ENCODE measurements at regions of chr7 and their contacts with region 1.

Region 1: GRCh38 chr7:100132697-100133151 is 6.0 kb downstream of the MBLAC1 start:
- DNase-seq: peak; percentile 89
- H3K4me3 ChIP-seq: peak overlapping the region in 1 of 2 experiments; percentile 6; a peak in 1 of 4 replicates
- H3K27ac ChIP-seq: 0 out of 4 replicates have a peak overlapping the region, but pooled peaks of 1 of the 2 experiments have one; percentile 1
- H3K4me1 ChIP-seq: peaks cover 5 to 10% of the 10 kb centered on the region in 2 experiments; a peak in 2 of 4 replicates
- H3K27me3 ChIP-seq: no peaks in the 10 kb centered on the region
- CTCF ChIP-seq: peak; percentile 97
- EP300 ChIP-seq: no peak
- RAD21 ChIP-seq: peak; percentile 97

Region 2: DNA sequence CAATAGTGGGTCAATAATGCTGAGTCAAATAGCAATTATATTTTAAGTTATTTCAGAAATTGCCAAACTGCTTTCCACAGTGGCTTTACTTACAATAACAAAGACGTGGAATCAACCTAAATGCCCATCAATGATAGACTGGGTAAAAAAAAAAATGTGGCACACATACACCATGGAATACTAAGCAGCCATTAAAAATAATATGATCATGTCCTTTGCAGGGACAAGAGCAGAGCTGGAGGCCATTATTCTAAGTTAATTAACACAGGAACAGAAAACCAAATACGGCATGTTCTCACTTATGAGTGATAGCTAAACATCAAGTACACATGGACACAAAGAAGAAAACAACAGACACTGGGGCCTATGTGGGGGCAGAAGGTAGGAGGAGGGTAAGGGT is 333.8 kb before region 1 on chr7:
- CTCF ChIA-PET with region 1: no interaction called
- POLR2A ChIA-PET with region 1: no interaction called
- DNase-seq: no peak
- H3K4me3 ChIP-seq: no peak overlapping the region
- H3K27ac ChIP-seq: no peak overlapping the region
- H3K4me1 ChIP-seq: no peaks in the 10 kb centered on the region
- H3K27me3 ChIP-seq: peaks cover 7% of the 10 kb centered on the region; the same call in 1 of the 2 replicates
- CTCF ChIP-seq: no peak
- EP300 ChIP-seq: no peak
- RAD21 ChIP-seq: no peak

Region 3: DNA sequence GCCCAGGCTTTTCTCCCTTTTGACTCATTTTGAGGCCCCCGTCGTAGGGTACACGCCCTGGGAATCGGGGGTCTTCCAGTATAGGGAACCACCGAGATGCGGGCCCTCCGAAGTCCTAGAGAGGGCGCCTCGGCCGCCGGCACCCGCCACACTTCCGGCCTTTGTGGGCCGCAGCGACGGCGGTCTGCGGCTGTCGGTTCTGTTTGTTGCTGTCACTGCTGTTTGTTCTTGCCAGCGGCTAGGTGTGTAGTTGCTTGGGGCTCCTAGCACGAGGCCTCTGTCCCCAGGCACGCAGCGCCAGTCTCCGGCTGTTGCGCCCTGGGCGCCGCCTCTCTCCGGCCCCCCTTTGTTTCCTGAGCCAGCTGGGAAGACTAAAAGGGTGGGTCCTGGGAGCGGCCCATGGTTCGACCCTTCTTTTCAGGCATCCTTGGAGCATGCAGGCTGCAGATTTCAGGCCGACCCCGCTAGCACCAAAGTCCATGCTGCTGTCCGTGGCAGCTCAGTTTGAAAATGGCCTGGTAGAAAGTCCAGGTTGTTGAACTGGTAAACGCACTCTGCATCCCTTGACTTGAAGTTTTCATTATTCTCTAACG is 135.1 kb before region 1 on chr7:
- CTCF ChIA-PET with region 1: interaction called, 42 read pairs
- POLR2A ChIA-PET with region 1: no interaction called
- DNase-seq: peak; percentile 82
- H3K4me3 ChIP-seq: peak overlapping the region in 1 of 2 experiments; percentile 2; a peak in 1 of 4 replicates
- H3K27ac ChIP-seq: no peak overlapping the region
- H3K4me1 ChIP-seq: no peaks in the 10 kb centered on the region; a peak in 1 of 4 replicates
- H3K27me3 ChIP-seq: peaks cover 7% of the 10 kb centered on the region; the same call in 1 of the 2 replicates
- CTCF ChIP-seq: no peak
- EP300 ChIP-seq: no peak
- RAD21 ChIP-seq: no peak

Region 4: DNA sequence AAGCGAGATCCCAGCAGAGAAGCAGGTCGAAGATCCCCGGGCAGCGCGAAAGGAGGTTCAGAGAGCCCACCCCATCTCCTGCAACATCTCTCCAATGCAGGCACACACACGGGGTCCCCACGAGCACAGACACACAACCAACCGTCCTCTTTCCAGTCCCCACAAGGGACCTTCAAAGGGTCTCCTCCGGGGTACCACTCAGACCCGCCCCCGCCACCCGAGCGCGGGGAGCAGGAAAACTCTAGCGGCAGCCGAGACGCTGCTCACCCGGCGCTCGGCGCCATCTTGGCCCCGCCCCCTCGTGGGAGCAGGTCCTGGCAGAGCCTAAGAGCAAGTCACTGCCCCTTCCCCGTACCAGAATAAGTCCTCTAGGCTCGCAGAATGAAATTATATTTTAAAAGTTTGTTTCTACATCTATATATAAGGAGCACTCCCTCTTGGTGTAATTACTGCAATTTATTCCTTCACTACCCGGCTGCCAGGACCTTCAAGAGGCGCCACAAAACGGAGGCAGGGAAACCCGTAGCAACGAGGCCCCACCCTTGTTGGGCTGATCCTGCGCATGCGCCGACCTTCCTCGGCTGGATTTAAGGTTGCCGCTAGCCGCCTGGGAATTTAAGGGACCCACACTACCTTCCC is 13.5 kb before region 1 on chr7 and contains the starts of genes CNPY4 and TAF6:
- CTCF ChIA-PET with region 1: interaction called, 42 read pairs
- POLR2A ChIA-PET with region 1: no interaction called
- DNase-seq: peak; percentile 100
- H3K4me3 ChIP-seq: peak within 1 kb of the TSS; percentile 69 to 97
- H3K27ac ChIP-seq: peak within 1 kb of the TSS; percentile 84
- H3K4me1 ChIP-seq: peaks cover 0 to 11% of the 10 kb centered on the region in 2 experiments; a peak in 2 of 4 replicates
- H3K27me3 ChIP-seq: no peaks in the 10 kb centered on the region
- CTCF ChIP-seq: no peak
- EP300 ChIP-seq: no peak
- RAD21 ChIP-seq: no peak
- polyA plus RNA-seq, gene CNPY4: 52.0 and 65.0 TPM in 2 replicates
- polyA plus RNA-seq, gene TAF6: 31.7 and 70.5 TPM in 2 replicates

Region 5: GRCh38 chr7:100158229-100159098 is 25.7 kb after region 1 on chr7 and contains the start of gene TRAPPC14:
- CTCF ChIA-PET with region 1: interaction called, 33 read pairs
- POLR2A ChIA-PET with region 1: interaction called, 4 read pairs
- DNase-seq: peak; percentile 100
- H3K4me3 ChIP-seq: peak within 1 kb of the TSS; percentile 87 to 93
- H3K27ac ChIP-seq: peak within 1 kb of the TSS; percentile 36 to 62
- H3K4me1 ChIP-seq: peaks cover 11 to 19% of the 10 kb centered on the region in 2 experiments; a peak in 2 of 4 replicates
- H3K27me3 ChIP-seq: no peaks in the 10 kb centered on the region
- CTCF ChIP-seq: no peak
- EP300 ChIP-seq: peak in 1 of 2 experiments; percentile 30; a peak in 1 of 4 replicates
- RAD21 ChIP-seq: no peak
- polyA plus RNA-seq, gene TRAPPC14: 13.9 and 16.4 TPM in 2 replicates

Region 6: GRCh38 chr7:100177045-100178001 is 44.6 kb after region 1 on chr7 and contains the starts of genes GPC2 and STAG3:
- CTCF ChIA-PET with region 1: interaction called, 54 read pairs
- POLR2A ChIA-PET with region 1: interaction called, 3 read pairs
- DNase-seq: peak; percentile 100
- H3K4me3 ChIP-seq: peak within 1 kb of the TSS; percentile 82 to 98
- H3K27ac ChIP-seq: peak within 1 kb of the TSS in 1 of 2 experiments; percentile 69; a peak in 1 of 4 replicates
- H3K4me1 ChIP-seq: peaks cover 0 to 16% of the 10 kb centered on the region in 2 experiments; a peak in 1 of 4 replicates
- H3K27me3 ChIP-seq: no peaks in the 10 kb centered on the region
- CTCF ChIP-seq: no peak
- EP300 ChIP-seq: no peak
- RAD21 ChIP-seq: no peak
- polyA plus RNA-seq, gene GPC2: 12.9 and 14.2 TPM in 2 replicates
- polyA plus RNA-seq, gene STAG3: 0.10 and 0.31 TPM in 2 replicates

Region 7: DNA sequence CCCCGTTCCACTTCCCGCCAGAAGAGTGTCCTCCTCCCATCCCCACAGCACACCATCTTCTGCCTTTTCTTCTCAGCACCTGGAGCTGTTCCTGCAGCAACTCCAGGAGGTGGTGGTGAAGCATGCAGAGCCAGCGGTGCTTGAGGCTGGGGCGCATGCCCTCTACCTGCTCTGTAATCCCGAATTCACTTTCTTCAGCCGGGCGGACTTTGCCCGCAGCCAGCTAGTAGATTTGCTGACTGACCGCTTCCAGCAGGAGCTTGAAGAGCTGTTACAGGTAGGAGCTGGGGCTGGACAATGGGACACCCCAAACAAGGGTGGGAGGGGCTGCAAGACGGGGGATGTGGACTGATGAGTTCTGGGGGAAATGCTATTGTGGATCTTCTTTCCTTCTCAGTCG is 68.0 kb after region 1 on chr7:
- CTCF ChIA-PET with region 1: interaction called, 18 read pairs
- POLR2A ChIA-PET with region 1: interaction called, 3 read pairs
- DNase-seq: no peak
- H3K4me3 ChIP-seq: no peak overlapping the region
- H3K27ac ChIP-seq: no peak overlapping the region
- H3K4me1 ChIP-seq: no peaks in the 10 kb centered on the region
- H3K27me3 ChIP-seq: no peaks in the 10 kb centered on the region; the same call in 1 of the 2 replicates
- CTCF ChIP-seq: no peak
- EP300 ChIP-seq: no peak
- RAD21 ChIP-seq: no peak

Region 8: DNA sequence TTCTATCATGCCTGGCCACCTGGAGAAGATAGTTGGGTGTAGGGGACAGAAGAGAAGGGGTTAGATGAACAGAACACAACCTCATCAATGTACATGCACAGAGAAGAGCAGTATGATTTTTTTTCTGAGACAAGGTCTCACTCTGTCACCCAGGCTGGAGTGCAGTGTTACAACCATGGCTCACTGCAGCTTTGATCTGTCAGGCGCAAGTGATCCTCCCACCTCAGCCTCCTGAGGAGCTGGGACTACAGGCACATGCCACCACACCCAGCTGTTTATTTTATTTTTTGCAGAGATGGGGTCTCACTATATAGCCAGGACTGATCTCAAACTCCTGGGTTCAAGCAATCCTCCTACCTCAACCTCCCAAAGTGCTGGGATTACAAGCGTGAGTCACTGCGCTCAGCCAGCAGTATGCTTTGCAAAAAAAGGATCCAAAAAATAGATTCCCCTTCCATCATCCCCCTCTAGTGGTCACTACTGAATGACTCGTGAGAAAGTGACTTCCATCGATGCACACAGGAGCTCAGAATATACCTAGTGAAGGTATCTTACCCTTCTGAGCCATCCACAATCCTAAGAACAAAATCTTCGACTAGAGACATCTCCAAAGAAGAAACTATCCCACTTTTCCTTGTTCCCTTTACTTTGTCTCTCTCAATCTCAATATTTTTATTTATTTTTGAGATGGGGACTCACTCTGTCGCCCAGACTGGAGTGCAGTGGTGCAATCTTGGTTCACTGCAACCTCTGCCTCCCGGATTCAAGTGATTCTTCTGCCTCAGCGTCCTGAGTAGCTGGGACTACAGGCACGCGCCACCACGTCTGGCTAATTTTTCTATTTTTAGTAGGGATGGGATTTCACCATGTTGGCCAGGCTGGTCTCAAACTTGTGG is 274.8 kb after region 1 on chr7:
- CTCF ChIA-PET with region 1: interaction called, 21 read pairs
- POLR2A ChIA-PET with region 1: no interaction called
- DNase-seq: peak; percentile 75
- H3K4me3 ChIP-seq: no peak overlapping the region
- H3K27ac ChIP-seq: no peak overlapping the region
- H3K4me1 ChIP-seq: no peaks in the 10 kb centered on the region
- H3K27me3 ChIP-seq: no peaks in the 10 kb centered on the region
- CTCF ChIP-seq: peak; percentile 90
- EP300 ChIP-seq: no peak
- RAD21 ChIP-seq: peak; percentile 81

Region 9: DNA sequence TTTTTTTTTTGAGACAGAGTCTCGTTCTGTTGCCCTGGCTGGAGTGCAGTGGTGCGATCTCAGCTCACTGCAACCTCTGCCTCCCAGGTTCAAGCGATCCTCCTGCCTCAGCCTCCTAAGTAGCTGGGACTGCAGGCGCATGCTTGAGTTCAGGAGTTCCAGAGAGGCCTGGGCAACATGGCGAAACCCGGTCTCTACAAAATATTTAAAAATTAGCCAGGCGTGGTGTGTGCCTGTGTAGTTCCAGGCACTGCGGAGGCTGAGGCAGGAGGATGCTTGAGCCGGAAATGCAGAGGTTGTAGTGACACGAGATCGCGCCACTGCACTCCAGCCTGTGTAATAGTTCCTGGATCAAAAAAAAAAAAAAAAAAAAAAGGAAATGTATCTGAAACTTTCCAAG is 718.7 kb after region 1 on chr7:
- CTCF ChIA-PET with region 1: no interaction called
- POLR2A ChIA-PET with region 1: no interaction called
- DNase-seq: no peak
- H3K4me3 ChIP-seq: no peak overlapping the region
- H3K27ac ChIP-seq: no peak overlapping the region
- H3K4me1 ChIP-seq: peaks cover 7% of the 10 kb centered on the region in 2 experiments; a peak in 2 of 4 replicates
- H3K27me3 ChIP-seq: no peaks in the 10 kb centered on the region
- CTCF ChIP-seq: no peak
- EP300 ChIP-seq: no peak
- RAD21 ChIP-seq: no peak

Measured in SK-N-SH (cell line).